Heart left ventricle (tissue), 16 donors: ENCODE measurements at regions of chr12 and their contacts with region 1.

Region 1: DNA sequence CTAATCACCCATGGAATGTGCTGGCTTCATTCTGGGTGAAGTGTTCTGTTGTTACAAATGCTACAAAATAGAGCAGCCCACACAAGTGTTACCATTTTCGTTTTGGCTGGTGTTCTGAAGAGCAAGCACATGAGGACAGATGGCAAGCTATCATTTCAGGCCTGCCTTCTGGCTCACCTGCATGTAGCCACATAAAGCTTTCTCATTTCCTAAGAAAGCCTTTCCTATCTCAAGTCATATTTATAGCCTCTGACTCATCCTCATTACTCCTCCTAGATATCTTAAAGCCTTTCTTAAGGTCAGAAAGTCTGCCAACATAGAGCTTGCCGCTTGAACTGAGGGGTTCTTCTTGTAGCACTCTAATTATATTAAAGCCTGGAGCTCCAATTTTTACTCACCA is 89.0 kb downstream of the PTPRR start:
- DNase-seq: no peak
- ATAC-seq: no peak
- H3K4me3 ChIP-seq: no peak overlapping the region
- H3K27ac ChIP-seq: no peak overlapping the region
- H3K4me1 ChIP-seq: no peaks in the 10 kb centered on the region
- H3K27me3 ChIP-seq: no peaks in the 10 kb centered on the region
- CTCF ChIP-seq: no peak
- POLR2A ChIP-seq: no peak

Region 2: GRCh38 chr12:70744133-70744532 is 87.4 kb before region 1 on chr12:
- intact Hi-C with region 1: loop called in 1 of 10 experiments (anchors 10 kb)
- DNase-seq: no peak
- ATAC-seq: no peak
- H3K4me3 ChIP-seq: no peak overlapping the region
- H3K27ac ChIP-seq: no peak overlapping the region
- H3K4me1 ChIP-seq: no peaks in the 10 kb centered on the region
- H3K27me3 ChIP-seq: no peaks in the 10 kb centered on the region
- CTCF ChIP-seq: no peak
- POLR2A ChIP-seq: no peak

Region 3: DNA sequence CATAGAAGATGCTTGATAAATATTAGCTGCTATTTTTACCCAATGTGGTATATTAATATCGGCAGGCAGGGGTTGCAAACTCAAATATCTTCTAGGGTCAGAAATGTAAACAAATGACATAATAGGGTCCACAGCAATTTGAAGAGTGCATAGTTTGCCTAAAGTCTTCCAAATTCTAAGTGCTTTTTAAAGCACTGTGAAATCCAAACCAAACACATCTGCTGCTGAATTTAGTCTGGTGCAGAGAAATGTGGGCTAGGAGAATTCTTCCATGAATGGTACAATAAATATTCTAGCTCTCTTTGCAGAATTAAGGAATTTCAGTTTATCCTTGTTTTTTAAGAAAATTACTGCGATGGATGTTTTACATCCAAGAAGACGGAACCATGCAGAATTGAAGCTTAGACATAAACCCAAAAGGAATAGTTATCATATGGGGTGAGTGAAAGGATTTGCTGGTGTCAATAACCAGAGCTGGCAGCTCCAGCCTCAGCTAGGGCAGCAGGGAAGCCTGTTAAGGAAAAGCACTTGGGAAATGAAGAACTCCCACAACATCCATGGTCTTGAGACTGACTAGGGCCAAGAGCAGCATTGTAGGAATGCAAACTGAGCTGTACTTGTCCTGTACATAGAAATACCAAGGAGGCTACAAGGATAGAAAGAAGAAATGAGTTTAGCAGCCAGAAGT is 23.5 kb after region 1 on chr12:
- intact Hi-C with region 1: no loop called
- DNase-seq: no peak
- ATAC-seq: no peak
- H3K4me3 ChIP-seq: no peak overlapping the region
- H3K27ac ChIP-seq: no peak overlapping the region
- H3K4me1 ChIP-seq: peaks cover 0 to 3% (median 0%) of the 10 kb centered on the region in 12 donors
- H3K27me3 ChIP-seq: no peaks in the 10 kb centered on the region
- CTCF ChIP-seq: no peak
- POLR2A ChIP-seq: no peak